ENCODE measurements at regions of chr18 and their contacts with region 1.

Region 1: GRCh38 chr18:46173393-46174341 is 69.5 kb downstream of the HAUS1 start:
- DNase-seq: peak; percentile 95
- H3K4me3 Mint-ChIP-seq: peak overlapping the region; percentile 99
- H3K27ac Mint-ChIP-seq: peak overlapping the region; percentile 97
- H3K4me1 Mint-ChIP-seq: peaks cover 44% of the 10 kb centered on the region
- H3K27me3 Mint-ChIP-seq: no peaks in the 10 kb centered on the region

Region 2: GRCh38 chr18:46013484-46014189 is 160.0 kb before region 1 on chr18:
- CTCF ChIA-PET with region 1: no interaction called
- intact Hi-C with region 1: no loop called
- DNase-seq: no peak
- H3K4me3 Mint-ChIP-seq: no peak overlapping the region
- H3K27ac Mint-ChIP-seq: no peak overlapping the region
- H3K4me1 Mint-ChIP-seq: peaks cover 13% of the 10 kb centered on the region
- H3K27me3 Mint-ChIP-seq: no peaks in the 10 kb centered on the region

Region 3: DNA sequence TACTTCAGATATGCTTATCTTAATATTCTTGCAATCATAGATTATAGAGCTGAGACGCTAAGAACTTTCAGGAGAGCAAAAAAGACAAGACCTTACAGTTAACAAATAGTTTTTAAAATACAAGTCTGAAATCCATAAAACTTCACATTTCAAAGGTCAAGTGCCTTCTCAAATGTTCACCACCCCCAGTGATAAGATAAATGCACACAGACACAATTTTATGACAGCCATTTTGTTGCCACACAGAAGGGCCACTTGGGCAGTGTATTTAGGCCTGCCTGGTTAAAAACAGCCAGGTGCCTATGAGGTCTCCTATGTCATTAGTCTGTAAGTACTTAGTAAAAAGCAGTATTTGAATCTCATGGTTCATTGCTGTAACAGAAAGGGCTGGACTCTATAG is 93.5 kb before region 1 on chr18:
- CTCF ChIA-PET with region 1: no interaction called
- intact Hi-C with region 1: no loop called
- DNase-seq: no peak
- H3K4me3 Mint-ChIP-seq: no peak overlapping the region
- H3K27ac Mint-ChIP-seq: no peak overlapping the region
- H3K4me1 Mint-ChIP-seq: no peaks in the 10 kb centered on the region
- H3K27me3 Mint-ChIP-seq: no peaks in the 10 kb centered on the region

Region 4: GRCh38 chr18:46104128-46104911 is 69.3 kb before region 1 on chr18 and contains the start of gene HAUS1:
- CTCF ChIA-PET with region 1: interaction called, 3 read pairs
- intact Hi-C with region 1: loop called (anchors 2 kb)
- DNase-seq: peak; percentile 89
- H3K4me3 Mint-ChIP-seq: peak within 1 kb of the TSS; percentile 97
- H3K27ac Mint-ChIP-seq: peak within 1 kb of the TSS; percentile 90
- H3K4me1 Mint-ChIP-seq: peaks cover 36% of the 10 kb centered on the region
- H3K27me3 Mint-ChIP-seq: no peaks in the 10 kb centered on the region
- total RNA-seq, gene HAUS1: 59.4 to 60.9 TPM

Region 5: DNA sequence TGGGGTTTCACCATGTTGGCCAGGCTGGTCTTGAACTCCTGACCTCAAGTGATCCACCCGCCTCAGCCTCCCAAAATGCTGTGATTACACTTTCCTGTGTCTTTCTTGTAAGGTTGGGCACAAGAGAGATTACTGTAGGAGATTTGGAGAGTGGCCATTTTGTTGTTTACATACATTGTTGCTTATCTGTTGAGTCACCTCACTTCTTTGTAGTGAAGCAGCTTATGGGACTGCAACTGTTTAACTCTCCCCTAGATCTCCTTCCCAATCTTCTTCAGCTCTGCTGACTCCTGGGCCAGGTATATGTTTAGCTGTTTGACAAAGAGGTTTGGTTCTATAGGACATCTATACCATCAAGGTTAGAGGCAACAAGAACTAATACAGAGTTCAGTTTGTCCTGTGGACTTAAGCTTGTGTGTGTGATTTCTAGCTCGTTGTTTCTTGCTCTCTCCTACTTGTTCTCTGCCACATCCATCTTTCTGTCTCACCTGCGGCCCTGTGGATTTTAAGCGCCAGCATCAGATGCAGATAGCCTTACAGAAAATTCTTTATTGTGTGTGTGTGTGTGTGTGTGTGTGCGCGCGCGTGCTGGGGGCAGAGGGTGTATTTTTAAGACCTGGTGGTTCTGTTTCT is 26.0 kb after region 1 on chr18:
- CTCF ChIA-PET with region 1: interaction called, 11 read pairs
- intact Hi-C with region 1: no loop called
- DNase-seq: no peak
- H3K4me3 Mint-ChIP-seq: no peak overlapping the region
- H3K27ac Mint-ChIP-seq: peak overlapping the region; percentile 0
- H3K4me1 Mint-ChIP-seq: peaks cover 67% of the 10 kb centered on the region
- H3K27me3 Mint-ChIP-seq: no peaks in the 10 kb centered on the region

Region 6: GRCh38 chr18:46250084-46250811 is 76.6 kb after region 1 on chr18:
- CTCF ChIA-PET with region 1: interaction called, 13 read pairs
- intact Hi-C with region 1: loop called (anchors 1 kb)
- DNase-seq: peak; percentile 66
- H3K4me3 Mint-ChIP-seq: peak overlapping the region; percentile 60
- H3K27ac Mint-ChIP-seq: peak overlapping the region; percentile 88
- H3K4me1 Mint-ChIP-seq: peaks cover 58% of the 10 kb centered on the region
- H3K27me3 Mint-ChIP-seq: no peaks in the 10 kb centered on the region

Region 7: DNA sequence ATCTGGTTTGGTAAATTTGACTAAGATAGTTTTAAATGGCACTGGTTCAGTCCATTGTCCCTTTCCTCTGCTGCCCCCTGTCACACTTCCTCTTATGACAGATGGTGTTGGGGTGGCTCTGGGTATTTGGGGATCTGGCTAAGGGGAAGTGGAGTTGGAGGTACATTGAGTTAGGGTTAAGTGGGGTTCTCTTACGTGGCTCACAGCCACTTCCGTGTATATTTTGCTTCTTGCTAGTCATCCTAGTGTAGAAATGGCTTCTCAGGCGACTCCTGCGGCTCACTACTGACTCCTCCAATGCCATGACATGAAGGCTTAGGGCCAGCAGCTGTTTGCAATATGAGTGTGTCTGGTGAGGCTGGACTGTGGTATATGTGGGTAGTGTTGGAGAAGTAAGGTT is 117.5 kb after region 1 on chr18:
- CTCF ChIA-PET with region 1: interaction called, 8 read pairs
- intact Hi-C with region 1: loop called (anchors 1 kb)
- DNase-seq: peak; percentile 15
- H3K4me3 Mint-ChIP-seq: no peak overlapping the region
- H3K27ac Mint-ChIP-seq: no peak overlapping the region
- H3K4me1 Mint-ChIP-seq: no peaks in the 10 kb centered on the region
- H3K27me3 Mint-ChIP-seq: no peaks in the 10 kb centered on the region

Region 8: DNA sequence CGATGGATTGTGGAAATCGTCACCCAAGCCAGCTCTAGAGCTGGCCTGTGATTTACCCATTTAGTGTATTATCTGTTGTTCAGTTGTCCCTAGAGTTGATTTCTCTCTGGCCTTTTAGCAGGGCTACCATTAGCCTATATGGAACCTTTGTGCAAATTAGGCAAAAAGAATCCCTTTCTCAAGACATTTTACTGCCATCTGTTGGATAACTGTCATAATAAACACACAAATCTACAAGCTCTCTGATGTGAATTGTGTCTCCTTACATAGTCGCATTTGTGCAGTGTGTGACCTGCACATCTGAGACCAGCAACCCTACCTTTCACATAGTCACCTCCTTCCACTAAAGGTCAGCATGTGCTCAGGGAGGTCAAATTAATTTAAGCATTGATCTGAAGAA is 449.3 kb after region 1 on chr18:
- CTCF ChIA-PET with region 1: interaction called, 9 read pairs
- intact Hi-C with region 1: loop called (anchors 1 kb)
- DNase-seq: no peak
- H3K4me3 Mint-ChIP-seq: no peak overlapping the region
- H3K27ac Mint-ChIP-seq: peak overlapping the region; percentile 71
- H3K4me1 Mint-ChIP-seq: peaks cover 27% of the 10 kb centered on the region
- H3K27me3 Mint-ChIP-seq: no peaks in the 10 kb centered on the region